HepG2 (cell line): ENCODE measurements at regions of chr7 and their contacts with region 1.

Region 1: DNA sequence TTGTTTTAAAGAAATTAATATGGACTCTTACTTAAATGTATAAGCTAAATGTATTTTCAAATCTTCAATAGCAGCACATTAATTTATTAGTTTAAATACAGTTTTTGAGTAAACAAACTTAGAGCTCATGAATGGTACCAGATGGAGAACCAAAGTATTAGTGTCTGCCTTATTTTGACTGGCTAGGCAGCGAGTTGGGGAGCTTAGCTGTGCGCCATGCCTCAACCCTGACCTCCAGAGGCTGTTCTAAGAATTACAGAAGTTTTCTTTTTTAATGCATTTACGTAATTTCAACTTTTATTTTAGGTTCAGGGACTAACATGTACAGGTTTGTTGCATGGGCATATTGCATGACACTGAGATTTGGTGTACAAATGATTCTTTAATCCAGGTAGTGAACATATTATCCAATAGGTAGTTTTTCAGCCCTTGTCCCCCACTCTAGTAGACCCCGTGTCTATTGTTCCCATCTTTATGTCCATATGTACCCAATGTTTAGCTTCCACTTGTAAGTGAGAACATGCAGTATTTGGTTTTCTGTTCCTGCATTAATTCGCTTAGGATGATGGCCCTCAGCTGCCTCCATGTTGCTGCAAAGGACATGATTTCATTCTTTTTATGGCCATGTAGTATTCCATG is 166.8 kb downstream of the IQUB start:
- DNase-seq: peak; percentile 10
- ATAC-seq: peak; percentile 86
- H3K4me3 ChIP-seq: no peak overlapping the region
- H3K27ac ChIP-seq: no peak overlapping the region
- H3K4me1 ChIP-seq: no peaks in the 10 kb centered on the region
- H3K27me3 ChIP-seq: no peaks in the 10 kb centered on the region
- CTCF ChIP-seq: peak; percentile 66
- EP300 ChIP-seq: no peak
- POLR2A ChIP-seq: no peak
- RAD21 ChIP-seq: 0 out of 2 replicates have a peak, but pooled peaks have one; percentile 34

Region 2: GRCh38 chr7:123070702-123071286 is 296.8 kb before region 1 on chr7:
- CTCF ChIA-PET with region 1: interaction called, 3 read pairs
- POLR2A ChIA-PET with region 1: no interaction called
- in situ Hi-C with region 1: no loop called
- intact Hi-C with region 1: loop called (anchors 5 kb)
- DNase-seq: peak; percentile 46
- ATAC-seq: peak; percentile 81
- H3K4me3 ChIP-seq: no peak overlapping the region
- H3K27ac ChIP-seq: no peak overlapping the region
- H3K4me1 ChIP-seq: no peaks in the 10 kb centered on the region
- H3K27me3 ChIP-seq: no peaks in the 10 kb centered on the region
- CTCF ChIP-seq: peak; percentile 67
- EP300 ChIP-seq: no peak
- POLR2A ChIP-seq: no peak
- RAD21 ChIP-seq: no peak

Region 3: DNA sequence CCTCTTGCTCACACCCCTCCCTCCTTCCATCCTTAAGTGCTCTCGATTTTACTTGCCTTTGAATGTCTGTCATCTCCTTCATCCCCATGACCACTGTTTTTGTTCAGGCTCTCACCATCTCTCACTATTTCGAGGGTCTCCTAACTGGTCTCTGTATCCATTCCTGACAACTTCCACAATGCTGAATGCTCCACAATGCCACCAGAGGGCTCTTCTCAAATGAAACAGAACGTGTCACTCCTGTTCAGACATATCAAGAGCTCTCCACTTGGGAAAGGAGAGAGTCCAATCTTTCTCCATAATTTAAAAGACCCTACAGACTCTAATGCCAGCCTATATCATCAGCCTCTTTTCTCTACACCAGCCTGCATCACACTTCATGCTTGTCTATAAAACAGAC is 158.8 kb before region 1 on chr7:
- CTCF ChIA-PET with region 1: no interaction called
- POLR2A ChIA-PET with region 1: no interaction called
- in situ Hi-C with region 1: no loop called
- intact Hi-C with region 1: loop called (anchors 1 kb)
- DNase-seq: peak; percentile 25
- ATAC-seq: peak; percentile 87
- H3K4me3 ChIP-seq: no peak overlapping the region
- H3K27ac ChIP-seq: no peak overlapping the region
- H3K4me1 ChIP-seq: no peaks in the 10 kb centered on the region
- H3K27me3 ChIP-seq: no peaks in the 10 kb centered on the region; a peak in 1 of 5 replicates
- CTCF ChIP-seq: peak; percentile 47
- EP300 ChIP-seq: no peak
- POLR2A ChIP-seq: no peak
- RAD21 ChIP-seq: no peak